ENCODE measurements at regions of chr9 and their contacts with region 1.

Region 1: DNA sequence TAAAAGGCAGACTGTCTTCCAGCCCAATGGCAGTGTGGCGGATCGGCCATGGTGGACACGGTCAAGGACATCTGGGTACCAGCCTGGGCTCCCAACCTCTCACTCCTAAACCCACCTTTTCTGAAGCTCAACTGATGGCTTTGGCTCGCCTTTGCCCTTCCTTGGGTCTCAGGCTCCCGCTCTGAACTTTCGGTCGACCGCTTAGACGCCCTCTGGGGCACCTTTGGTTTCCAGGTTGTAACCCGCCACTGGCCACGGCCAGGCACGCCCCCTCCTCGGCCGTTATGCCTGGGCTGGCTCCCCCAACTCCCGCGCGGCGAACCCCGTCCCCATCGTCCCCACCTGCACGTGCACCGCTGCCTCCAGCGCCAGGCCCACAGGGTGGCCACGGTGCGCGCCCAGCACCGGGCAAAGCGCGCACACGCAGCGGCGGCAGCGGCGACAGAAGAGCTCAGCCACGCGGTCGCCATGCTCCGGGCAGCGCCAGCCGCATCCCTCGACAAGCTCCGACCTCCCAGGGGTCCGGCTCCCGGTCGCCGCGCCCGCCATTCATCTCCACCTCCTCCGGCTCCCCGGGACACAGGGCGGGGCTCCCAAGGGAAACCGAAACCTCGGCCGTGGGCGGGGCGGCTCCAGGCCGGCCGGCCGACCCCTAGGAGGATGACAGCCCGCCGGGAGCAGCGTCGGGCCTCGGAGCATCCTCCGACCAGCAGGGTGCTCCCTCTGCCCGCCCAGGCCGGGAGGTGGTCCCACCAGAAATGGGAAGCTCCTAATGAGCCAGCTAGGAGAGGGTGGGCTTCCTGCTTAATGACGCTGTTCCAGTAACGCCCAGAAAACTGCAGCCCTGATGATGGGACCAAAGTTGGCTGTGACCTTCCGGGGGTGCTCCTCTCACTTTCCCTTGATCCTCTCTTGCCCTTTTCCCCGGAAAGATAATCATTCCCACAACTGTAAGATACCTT is at the start of gene TRIM14:
- DNase-seq: peak; percentile 23 to 79 (median 39)
- ATAC-seq: peak; percentile 64
- H3K4me3 ChIP-seq: peak within 1 kb of the TSS; percentile 78
- H3K4me3 Mint-ChIP-seq: peak within 1 kb of the TSS; percentile 81 to 100 (median 93)
- H3K27ac ChIP-seq: peak within 1 kb of the TSS; percentile 93
- H3K27ac Mint-ChIP-seq: peak within 1 kb of the TSS; percentile 95 to 100 (median 96)
- H3K4me1 ChIP-seq: peaks cover 26 to 39% of the 10 kb centered on the region in 2 donors
- H3K4me1 Mint-ChIP-seq: peaks cover 35 to 70% (median 58%) of the 10 kb centered on the region in 7 donors
- H3K27me3 ChIP-seq: no peaks in the 10 kb centered on the region
- H3K27me3 Mint-ChIP-seq: no peaks in the 10 kb centered on the region
- total RNA-seq, gene TRIM14: 54.1 to 114 (median 79.7) TPM

Region 2: DNA sequence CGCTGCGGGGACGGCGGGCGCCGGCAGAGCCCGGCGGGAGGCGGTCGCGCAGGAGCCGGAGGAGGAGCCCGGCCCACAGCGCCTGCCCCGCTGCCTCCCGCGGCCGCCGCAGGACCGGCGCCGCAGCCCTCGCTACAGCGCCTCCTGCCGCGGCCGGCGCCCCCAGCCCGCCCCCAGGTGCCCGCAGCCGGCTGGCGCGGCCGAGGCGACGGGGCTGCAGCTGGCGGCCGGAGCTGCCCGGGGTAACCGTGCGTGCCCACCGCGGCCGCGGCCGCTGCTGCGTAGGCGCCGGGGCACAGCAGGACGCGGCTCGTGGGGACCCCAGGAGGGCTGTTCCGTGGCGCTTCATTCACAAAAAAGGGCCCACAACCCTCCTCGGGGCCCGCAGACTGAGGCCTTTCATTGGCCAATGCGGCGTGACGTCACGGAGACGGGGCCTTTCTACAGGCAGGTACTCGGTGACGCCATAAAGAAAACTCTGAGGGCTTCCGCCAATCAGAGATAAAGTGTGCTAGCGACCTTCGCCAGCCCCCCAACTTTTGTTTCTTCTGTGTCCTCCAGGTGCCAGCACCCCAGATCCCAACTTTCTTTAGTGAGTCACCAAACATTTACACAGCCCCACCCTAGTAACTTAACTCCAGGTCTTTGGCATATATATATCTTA is 1499.3 kb before region 1 on chr9 and contains the start of gene CDC14B:
- CTCF ChIA-PET with region 1: no interaction called
- POLR2A ChIA-PET with region 1: no interaction called
- intact Hi-C with region 1: loop called in 1 of 2 experiments (anchors 5 kb)
- DNase-seq: peak; percentile 42 to 84 (median 62)
- ATAC-seq: peak; percentile 83
- H3K4me3 ChIP-seq: peak within 1 kb of the TSS; percentile 51
- H3K4me3 Mint-ChIP-seq: peak within 1 kb of the TSS; percentile 59 to 85 (median 78)
- H3K27ac ChIP-seq: no peak within 1 kb of the TSS
- H3K27ac Mint-ChIP-seq: peak within 1 kb of the TSS in 5 of 9 donors; percentile 17 to 71 (median 38)
- H3K4me1 ChIP-seq: peaks cover 0 to 8% of the 10 kb centered on the region in 2 donors
- H3K4me1 Mint-ChIP-seq: peaks cover 0 to 20% (median 5%) of the 10 kb centered on the region in 7 donors
- H3K27me3 ChIP-seq: peaks cover 2 to 4% of the 10 kb centered on the region in 2 donors
- H3K27me3 Mint-ChIP-seq: peaks cover 24 to 60% (median 52%) of the 10 kb centered on the region in 5 donors
- total RNA-seq, gene CDC14B: 0.41 to 16.5 (median 9.4) TPM

Region 3: GRCh38 chr9:97873877-97874276 is 245.0 kb before region 1 on chr9:
- CTCF ChIA-PET with region 1: no interaction called
- POLR2A ChIA-PET with region 1: no interaction called
- intact Hi-C with region 1: no loop called
- DNase-seq: no peak
- ATAC-seq: no peak
- H3K4me3 ChIP-seq: no peak overlapping the region
- H3K4me3 Mint-ChIP-seq: no peak overlapping the region
- H3K27ac ChIP-seq: no peak overlapping the region
- H3K27ac Mint-ChIP-seq: no peak overlapping the region
- H3K4me1 ChIP-seq: no peaks in the 10 kb centered on the region
- H3K4me1 Mint-ChIP-seq: peaks cover 0 to 5% (median 0%) of the 10 kb centered on the region in 7 donors
- H3K27me3 ChIP-seq: no peaks in the 10 kb centered on the region
- H3K27me3 Mint-ChIP-seq: peaks cover 4 to 28% (median 10%) of the 10 kb centered on the region in 5 donors

Region 4: GRCh38 chr9:98091881-98092612 is 26.9 kb before region 1 on chr9:
- CTCF ChIA-PET with region 1: interaction called, 5 read pairs
- POLR2A ChIA-PET with region 1: interaction called, 13 read pairs
- intact Hi-C with region 1: no loop called
- DNase-seq: no peak
- ATAC-seq: no peak
- H3K4me3 ChIP-seq: no peak overlapping the region
- H3K4me3 Mint-ChIP-seq: peak overlapping the region in 8 of 10 donors; percentile 32 to 78 (median 60)
- H3K27ac ChIP-seq: no peak overlapping the region
- H3K27ac Mint-ChIP-seq: peak overlapping the region; percentile 79 to 95 (median 84)
- H3K4me1 ChIP-seq: peaks cover 0 to 21% of the 10 kb centered on the region in 2 donors
- H3K4me1 Mint-ChIP-seq: peaks cover 22 to 72% (median 69%) of the 10 kb centered on the region in 7 donors
- H3K27me3 ChIP-seq: no peaks in the 10 kb centered on the region
- H3K27me3 Mint-ChIP-seq: no peaks in the 10 kb centered on the region

Region 5: DNA sequence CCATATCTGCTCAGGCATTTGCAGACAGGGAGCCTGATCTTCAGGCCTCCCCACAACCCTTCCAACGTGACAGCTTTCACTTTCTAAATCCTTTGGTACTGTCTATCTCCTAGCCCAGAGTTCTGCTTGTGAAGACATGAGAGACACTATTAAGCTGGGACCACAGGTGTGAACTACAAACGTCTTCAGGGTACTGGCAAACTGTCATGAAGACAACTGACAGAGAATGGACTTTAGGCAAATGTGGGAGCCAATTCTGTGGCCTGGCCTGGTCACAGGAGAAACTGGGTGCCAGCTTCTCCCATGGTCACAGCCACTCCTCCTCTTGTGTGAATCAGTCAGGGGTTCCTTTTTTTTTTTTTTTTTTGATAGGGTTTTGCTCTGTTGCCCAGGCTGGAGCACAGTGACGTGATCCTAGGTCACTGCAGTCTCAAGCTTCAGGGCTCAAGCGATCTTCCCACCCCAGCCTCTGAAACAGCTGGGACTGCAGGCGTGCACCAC is 10.3 kb before region 1 on chr9:
- CTCF ChIA-PET with region 1: interaction called, 12 read pairs
- POLR2A ChIA-PET with region 1: interaction called, 62 read pairs
- intact Hi-C with region 1: loop called (anchors 1 kb)
- DNase-seq: peak in 8 of 9 donors; percentile 37 to 76 (median 66)
- ATAC-seq: peak; percentile 93
- H3K4me3 ChIP-seq: peak overlapping the region; percentile 10
- H3K4me3 Mint-ChIP-seq: peak overlapping the region; percentile 52 to 83 (median 73)
- H3K27ac ChIP-seq: peak overlapping the region; percentile 77
- H3K27ac Mint-ChIP-seq: peak overlapping the region; percentile 81 to 99 (median 97)
- H3K4me1 ChIP-seq: peaks cover 69 to 70% of the 10 kb centered on the region in 2 donors
- H3K4me1 Mint-ChIP-seq: peaks cover 50 to 91% (median 83%) of the 10 kb centered on the region in 7 donors
- H3K27me3 ChIP-seq: no peaks in the 10 kb centered on the region
- H3K27me3 Mint-ChIP-seq: no peaks in the 10 kb centered on the region

Region 6: DNA sequence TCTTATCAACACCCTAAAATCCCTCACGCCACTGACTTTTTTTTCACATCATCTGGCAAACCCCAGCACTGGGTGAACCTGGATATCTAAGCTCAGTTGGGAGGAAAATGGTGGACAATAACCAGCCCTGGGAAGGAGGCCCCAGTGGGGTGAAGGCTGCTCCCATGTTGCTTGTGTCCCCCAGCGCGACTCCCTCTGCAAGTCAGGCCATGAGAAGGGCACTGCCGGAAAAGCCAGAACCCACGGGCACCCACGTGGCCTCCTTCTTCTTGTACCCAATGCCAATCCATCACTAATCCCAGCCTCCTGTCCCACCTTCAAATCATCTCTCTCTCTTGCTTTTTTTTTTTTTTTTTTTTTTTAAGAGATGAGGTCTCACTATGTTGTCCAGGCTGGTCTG is 62.1 kb after region 1 on chr9:
- CTCF ChIA-PET with region 1: no interaction called
- POLR2A ChIA-PET with region 1: no interaction called
- intact Hi-C with region 1: no loop called
- DNase-seq: no peak
- ATAC-seq: no peak
- H3K4me3 ChIP-seq: no peak overlapping the region
- H3K4me3 Mint-ChIP-seq: no peak overlapping the region
- H3K27ac ChIP-seq: no peak overlapping the region
- H3K27ac Mint-ChIP-seq: no peak overlapping the region
- H3K4me1 ChIP-seq: peaks cover 0 to 5% of the 10 kb centered on the region in 2 donors
- H3K4me1 Mint-ChIP-seq: peaks cover 6 to 63% (median 39%) of the 10 kb centered on the region in 7 donors
- H3K27me3 ChIP-seq: no peaks in the 10 kb centered on the region
- H3K27me3 Mint-ChIP-seq: peaks cover 0 to 3% (median 0%) of the 10 kb centered on the region in 5 donors

Region 7: GRCh38 chr9:98207606-98208005 is 88.7 kb after region 1 on chr9:
- CTCF ChIA-PET with region 1: interaction called, 7 read pairs
- POLR2A ChIA-PET with region 1: interaction called, 5 read pairs
- intact Hi-C with region 1: loop called (anchors 1 to 2 kb)
- DNase-seq: no peak
- ATAC-seq: no peak
- H3K4me3 ChIP-seq: no peak overlapping the region
- H3K4me3 Mint-ChIP-seq: no peak overlapping the region
- H3K27ac ChIP-seq: no peak overlapping the region
- H3K27ac Mint-ChIP-seq: peak overlapping the region in 1 of 9 donors; percentile 28
- H3K4me1 ChIP-seq: no peaks in the 10 kb centered on the region
- H3K4me1 Mint-ChIP-seq: peaks cover 3 to 7% (median 6%) of the 10 kb centered on the region in 7 donors
- H3K27me3 ChIP-seq: no peaks in the 10 kb centered on the region
- H3K27me3 Mint-ChIP-seq: no peaks in the 10 kb centered on the region